ENCODE measurements at regions of chr12 and their contacts with region 1.

Region 1: DNA sequence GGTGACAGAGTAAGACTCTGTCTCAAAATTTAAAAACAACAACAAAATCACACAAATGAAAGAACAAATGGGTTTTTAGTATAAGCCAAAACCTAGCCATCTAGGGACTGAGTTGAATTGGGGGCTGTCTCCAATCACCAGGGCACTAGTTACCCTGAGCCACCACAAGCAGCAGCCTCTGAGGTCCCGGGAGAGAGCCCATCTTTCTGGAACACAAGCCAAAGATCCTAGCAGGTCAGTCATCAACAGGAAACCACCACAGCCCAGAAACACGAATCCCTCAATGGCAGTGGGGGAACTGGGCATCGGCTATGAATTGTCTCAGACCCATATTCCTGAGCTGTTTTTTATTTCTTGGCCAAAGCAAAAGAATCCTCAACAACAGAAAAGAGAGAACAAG is 75.3 kb downstream of the KDM2B start:
- DNase-seq: no peak
- ATAC-seq: no peak
- H3K4me3 ChIP-seq: no peak overlapping the region
- H3K27ac ChIP-seq: no peak overlapping the region
- H3K4me1 ChIP-seq: peaks cover 0 to 22% (median 5%) of the 10 kb centered on the region in 9 donors
- H3K27me3 ChIP-seq: no peaks in the 10 kb centered on the region
- CTCF ChIP-seq: no peak

Region 2: GRCh38 chr12:121427556-121428055 is 77.9 kb before region 1 on chr12:
- intact Hi-C with region 1: no loop called
- DNase-seq: no peak
- ATAC-seq: no peak
- H3K4me3 ChIP-seq: no peak overlapping the region
- H3K27ac ChIP-seq: no peak overlapping the region
- H3K4me1 ChIP-seq: peaks cover 0 to 29% (median 5%) of the 10 kb centered on the region in 9 donors
- H3K27me3 ChIP-seq: no peaks in the 10 kb centered on the region
- CTCF ChIP-seq: no peak

Region 3: GRCh38 chr12:121543786-121544185 is 38.3 kb after region 1 on chr12:
- intact Hi-C with region 1: loop called in 3 of 10 experiments (anchors 5 kb)
- DNase-seq: no peak
- ATAC-seq: no peak
- H3K4me3 ChIP-seq: no peak overlapping the region
- H3K27ac ChIP-seq: no peak overlapping the region
- H3K4me1 ChIP-seq: peaks cover 0 to 15% (median 2%) of the 10 kb centered on the region in 9 donors
- H3K27me3 ChIP-seq: no peaks in the 10 kb centered on the region
- CTCF ChIP-seq: no peak

Measured in heart right ventricle (tissue), 16 donors.